SK-N-SH (cell line): ENCODE measurements at regions of chr16 and their contacts with region 1.

Region 1: GRCh38 chr16:5490499-5490898 is 392.9 kb upstream of the EEF2KMT start:
- DNase-seq: peak; percentile 70
- H3K4me3 ChIP-seq: peak overlapping the region in 1 of 2 experiments; percentile 41; a peak in 1 of 4 replicates
- H3K27ac ChIP-seq: no peak overlapping the region
- H3K4me1 ChIP-seq: peaks cover 0 to 9% of the 10 kb centered on the region in 2 experiments; a peak in 1 of 4 replicates
- H3K27me3 ChIP-seq: no peaks in the 10 kb centered on the region
- CTCF ChIP-seq: peak; percentile 41
- EP300 ChIP-seq: no peak
- RAD21 ChIP-seq: peak; percentile 91

Region 2: GRCh38 chr16:5234295-5235050 is 256.0 kb before region 1 on chr16:
- CTCF ChIA-PET with region 1: interaction called, 55 read pairs
- POLR2A ChIA-PET with region 1: no interaction called
- DNase-seq: no peak
- H3K4me3 ChIP-seq: no peak overlapping the region
- H3K27ac ChIP-seq: no peak overlapping the region
- H3K4me1 ChIP-seq: no peaks in the 10 kb centered on the region
- H3K27me3 ChIP-seq: no peaks in the 10 kb centered on the region
- CTCF ChIP-seq: no peak
- EP300 ChIP-seq: no peak
- RAD21 ChIP-seq: no peak

Region 3: DNA sequence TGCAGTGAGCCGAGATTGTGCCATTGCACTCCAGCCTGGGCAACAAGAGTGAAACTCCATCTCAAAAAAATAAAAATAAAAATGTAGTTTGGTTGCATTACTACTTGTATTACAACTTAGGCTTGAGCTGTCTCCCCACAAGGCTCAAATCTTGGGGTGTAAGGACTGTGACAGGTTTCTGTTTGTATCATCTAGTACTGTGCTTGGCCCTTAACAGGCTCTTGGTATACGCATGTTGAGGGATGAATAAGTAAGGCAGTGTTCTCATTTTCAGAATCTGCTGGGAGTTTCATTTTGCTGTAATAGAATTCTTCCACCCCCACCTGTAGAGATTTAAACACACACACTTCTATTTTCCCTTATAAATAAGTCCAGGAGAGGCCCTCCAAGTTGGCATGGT is 103.5 kb before region 1 on chr16:
- CTCF ChIA-PET with region 1: no interaction called
- POLR2A ChIA-PET with region 1: no interaction called
- DNase-seq: no peak
- H3K4me3 ChIP-seq: no peak overlapping the region
- H3K27ac ChIP-seq: no peak overlapping the region
- H3K4me1 ChIP-seq: no peaks in the 10 kb centered on the region
- H3K27me3 ChIP-seq: no peaks in the 10 kb centered on the region
- CTCF ChIP-seq: no peak
- EP300 ChIP-seq: no peak
- RAD21 ChIP-seq: no peak

Region 4: GRCh38 chr16:5461141-5461540 is 29.4 kb before region 1 on chr16:
- CTCF ChIA-PET with region 1: interaction called, 12 read pairs
- POLR2A ChIA-PET with region 1: no interaction called
- DNase-seq: peak; percentile 41
- H3K4me3 ChIP-seq: no peak overlapping the region
- H3K27ac ChIP-seq: peak overlapping the region in 1 of 2 experiments; percentile 95; a peak in 2 of 4 replicates
- H3K4me1 ChIP-seq: peaks cover 0 to 33% of the 10 kb centered on the region in 2 experiments; a peak in 2 of 4 replicates
- H3K27me3 ChIP-seq: no peaks in the 10 kb centered on the region
- CTCF ChIP-seq: no peak
- EP300 ChIP-seq: no peak
- RAD21 ChIP-seq: no peak

Region 5: GRCh38 chr16:5479926-5480325 is 10.6 kb before region 1 on chr16:
- CTCF ChIA-PET with region 1: interaction called, 58 read pairs
- POLR2A ChIA-PET with region 1: no interaction called
- DNase-seq: no peak
- H3K4me3 ChIP-seq: no peak overlapping the region
- H3K27ac ChIP-seq: no peak overlapping the region
- H3K4me1 ChIP-seq: peaks cover 0 to 6% of the 10 kb centered on the region in 2 experiments; a peak in 1 of 4 replicates
- H3K27me3 ChIP-seq: no peaks in the 10 kb centered on the region
- CTCF ChIP-seq: no peak
- EP300 ChIP-seq: no peak
- RAD21 ChIP-seq: no peak

Region 6: DNA sequence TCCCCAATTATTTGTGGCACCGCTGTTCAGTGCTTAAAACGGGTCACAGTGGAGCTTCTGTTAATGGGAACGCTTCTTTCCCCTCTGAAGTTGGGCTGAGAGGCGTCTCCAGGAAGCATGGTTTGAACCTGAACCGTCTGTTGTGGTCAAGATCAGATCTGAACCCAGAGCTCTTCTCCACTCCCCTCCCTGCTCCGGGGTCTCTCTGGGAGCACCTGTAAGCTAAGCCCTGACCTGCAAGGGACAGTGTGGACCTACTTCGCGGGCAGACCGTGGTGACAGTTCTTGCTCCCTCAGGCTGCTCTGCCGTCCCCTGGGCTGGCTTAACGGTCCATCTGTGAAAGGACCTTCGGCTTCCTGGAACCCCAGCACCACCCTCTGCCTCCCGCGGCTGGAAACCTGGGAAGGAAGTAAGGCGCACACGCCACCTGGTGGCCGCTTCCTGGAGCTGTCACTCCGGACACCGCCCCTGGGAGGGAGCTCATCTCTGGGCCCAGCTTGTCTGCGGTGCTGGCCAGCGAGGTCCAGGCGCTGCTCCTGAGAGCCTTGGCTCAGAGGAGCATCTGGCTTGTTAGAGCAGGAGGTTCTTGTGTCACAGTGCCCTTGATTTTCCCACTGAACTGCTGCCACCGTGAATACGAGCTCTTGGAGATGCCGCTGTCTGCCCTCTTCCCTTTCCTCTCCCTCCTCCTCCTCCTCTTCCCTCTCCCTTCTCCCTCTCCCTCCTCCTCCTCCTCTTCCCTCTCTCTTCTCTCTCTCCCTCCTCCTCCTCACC is 125.6 kb after region 1 on chr16:
- CTCF ChIA-PET with region 1: interaction called, 43 read pairs
- POLR2A ChIA-PET with region 1: interaction called, 4 read pairs
- DNase-seq: peak; percentile 84
- H3K4me3 ChIP-seq: peak overlapping the region in 1 of 2 experiments; percentile 47; a peak in 2 of 4 replicates
- H3K27ac ChIP-seq: peak overlapping the region in 1 of 2 experiments; percentile 96; a peak in 2 of 4 replicates
- H3K4me1 ChIP-seq: peaks cover 0 to 53% of the 10 kb centered on the region in 2 experiments; a peak in 2 of 4 replicates
- H3K27me3 ChIP-seq: no peaks in the 10 kb centered on the region
- CTCF ChIP-seq: peak; percentile 41
- EP300 ChIP-seq: peak in 1 of 2 experiments; percentile 41; a peak in 1 of 4 replicates
- RAD21 ChIP-seq: peak; percentile 76

Region 7: GRCh38 chr16:5837007-5837670 is 346.6 kb after region 1 on chr16:
- CTCF ChIA-PET with region 1: no interaction called
- POLR2A ChIA-PET with region 1: no interaction called
- DNase-seq: no peak
- H3K4me3 ChIP-seq: no peak overlapping the region
- H3K27ac ChIP-seq: no peak overlapping the region
- H3K4me1 ChIP-seq: peaks cover 0 to 5% of the 10 kb centered on the region in 2 experiments; a peak in 1 of 4 replicates
- H3K27me3 ChIP-seq: no peaks in the 10 kb centered on the region
- CTCF ChIP-seq: no peak
- EP300 ChIP-seq: no peak
- RAD21 ChIP-seq: no peak